GM23248 (cell line): ENCODE measurements at regions of chr6 and their contacts with region 1.

Region 1: GRCh38 chr6:165231581-165232561 is 77.5 kb downstream of the C6orf118 start:
- DNase-seq: peak; percentile 85
- H3K4me3 ChIP-seq: no peak overlapping the region
- H3K27ac ChIP-seq: peak overlapping the region; percentile 61
- H3K4me1 ChIP-seq: peaks cover 35% of the 10 kb centered on the region
- H3K27me3 ChIP-seq: no peaks in the 10 kb centered on the region

Region 2: GRCh38 chr6:163554663-163555062 is 1677.2 kb before region 1 on chr6:
- in situ Hi-C with region 1: loop called (anchors 25 kb)
- DNase-seq: peak; percentile 65
- H3K4me3 ChIP-seq: no peak overlapping the region
- H3K27ac ChIP-seq: no peak overlapping the region
- H3K4me1 ChIP-seq: no peaks in the 10 kb centered on the region
- H3K27me3 ChIP-seq: no peaks in the 10 kb centered on the region

Region 3: GRCh38 chr6:164911873-164912580 is 319.8 kb before region 1 on chr6:
- in situ Hi-C with region 1: loop called (anchors 25 kb)
- DNase-seq: peak; percentile 24
- H3K4me3 ChIP-seq: no peak overlapping the region
- H3K27ac ChIP-seq: no peak overlapping the region
- H3K4me1 ChIP-seq: no peaks in the 10 kb centered on the region
- H3K27me3 ChIP-seq: no peaks in the 10 kb centered on the region

Region 4: GRCh38 chr6:165052561-165053480 is 179.1 kb before region 1 on chr6:
- in situ Hi-C with region 1: loop called (anchors 5 kb)
- DNase-seq: no peak
- H3K4me3 ChIP-seq: no peak overlapping the region
- H3K27ac ChIP-seq: no peak overlapping the region
- H3K4me1 ChIP-seq: 0 out of 2 replicates have a peak, but pooled peaks cover 6% of the 10 kb centered on the region
- H3K27me3 ChIP-seq: no peaks in the 10 kb centered on the region